ENCODE measurements at regions of chr1 and their contacts with region 1.

Region 1: GRCh38 chr1:109483672-109484518 is at the start of gene ATXN7L2:
- DNase-seq: peak; percentile 94
- H3K4me3 Mint-ChIP-seq: peak within 1 kb of the TSS; percentile 93
- H3K27ac Mint-ChIP-seq: peak within 1 kb of the TSS; percentile 79
- H3K4me1 Mint-ChIP-seq: peaks cover 36% of the 10 kb centered on the region
- H3K27me3 Mint-ChIP-seq: peaks cover 17% of the 10 kb centered on the region
- total RNA-seq, gene ATXN7L2: 7.0 to 7.6 TPM

Region 2: DNA sequence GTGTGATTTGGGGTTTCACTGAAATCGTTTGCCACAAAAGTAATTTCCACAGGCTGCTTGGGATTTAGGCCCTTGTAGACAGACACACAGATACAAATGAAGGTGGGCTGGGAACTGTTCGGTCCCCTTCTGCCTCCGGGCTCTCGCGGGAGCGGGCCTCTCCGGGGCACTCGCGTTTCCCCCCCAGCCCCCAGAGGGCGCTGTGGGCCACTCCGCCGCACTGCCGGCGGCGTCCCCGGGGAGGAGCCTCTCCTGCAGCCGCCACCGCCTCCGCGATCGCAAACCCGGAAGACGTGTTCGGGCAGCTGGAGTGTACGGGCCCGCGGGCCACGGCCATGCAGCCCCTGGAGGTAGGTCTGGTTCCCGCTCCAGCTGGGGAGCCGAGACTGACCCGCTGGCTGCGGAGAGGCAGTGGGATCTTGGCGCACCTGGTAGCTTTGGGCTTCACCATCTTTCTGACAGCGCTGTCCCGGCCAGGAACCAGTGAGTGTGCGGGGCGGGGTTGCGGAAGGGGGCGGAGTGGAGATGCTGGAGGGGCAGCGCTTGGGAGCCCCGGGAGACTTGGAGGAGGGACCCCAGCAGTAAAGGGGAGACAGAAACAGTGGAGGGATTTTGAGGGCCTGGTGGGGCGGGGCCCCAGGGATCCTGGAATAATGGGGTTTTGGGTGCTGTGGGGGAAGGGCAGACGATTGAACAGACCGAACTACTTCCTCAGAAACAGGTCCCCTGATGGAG is 10.1 kb after region 1 on chr1 and contains the start of gene CYB561D1:
- CTCF ChIA-PET with region 1: interaction called, 51 read pairs
- POLR2A ChIA-PET with region 1: interaction called, 64 read pairs
- DNase-seq: peak; percentile 91
- H3K4me3 Mint-ChIP-seq: peak within 1 kb of the TSS; percentile 96
- H3K27ac Mint-ChIP-seq: peak within 1 kb of the TSS; percentile 82
- H3K4me1 Mint-ChIP-seq: peaks cover 42% of the 10 kb centered on the region
- H3K27me3 Mint-ChIP-seq: no peaks in the 10 kb centered on the region
- total RNA-seq, gene CYB561D1: 19.5 to 21.4 TPM

Region 3: DNA sequence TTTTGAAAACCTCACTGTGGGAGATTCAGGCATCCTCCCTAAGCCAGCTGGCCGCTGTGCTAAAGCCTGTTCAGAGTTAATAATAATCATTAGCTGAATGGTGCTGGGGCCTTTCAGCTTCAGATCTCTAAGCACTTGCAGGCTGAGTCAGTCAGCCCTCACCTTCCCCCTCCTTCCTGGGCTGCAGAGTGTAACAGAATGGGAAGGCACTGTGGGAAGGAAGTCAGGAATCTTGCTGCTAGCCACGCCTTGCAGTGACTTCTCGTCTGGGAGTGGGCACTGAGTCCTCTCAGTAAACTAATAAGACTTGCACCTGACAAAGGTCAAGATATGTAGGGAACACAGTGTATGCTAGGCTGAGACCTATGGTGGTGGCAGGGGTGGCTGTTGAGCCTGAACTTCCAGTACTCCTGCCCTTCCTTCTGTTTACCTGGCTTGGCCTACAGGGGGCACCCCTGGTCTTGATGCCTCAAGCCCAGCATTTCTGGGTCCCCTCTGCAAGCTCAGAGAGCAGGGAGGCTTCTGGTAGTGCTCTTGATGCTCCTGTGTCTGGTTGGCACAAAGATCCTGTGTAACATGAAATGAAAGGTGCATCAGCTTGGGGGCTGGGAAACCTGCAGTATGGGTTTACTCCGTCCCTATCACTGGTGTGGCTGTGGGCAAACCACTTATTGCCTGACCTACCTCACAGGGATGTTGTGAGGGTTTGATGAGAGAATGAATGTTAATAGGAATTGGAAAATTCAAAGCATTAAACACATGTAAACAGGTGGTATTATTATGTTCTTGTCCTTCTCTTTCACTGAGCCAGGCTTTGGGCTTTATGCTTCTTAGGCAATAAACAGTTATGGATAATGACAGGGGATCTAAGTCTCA is 16.0 kb after region 1 on chr1:
- CTCF ChIA-PET with region 1: interaction called, 139 read pairs
- POLR2A ChIA-PET with region 1: interaction called, 64 read pairs
- DNase-seq: peak; percentile 54
- H3K4me3 Mint-ChIP-seq: no peak overlapping the region
- H3K27ac Mint-ChIP-seq: peak overlapping the region; percentile 47
- H3K4me1 Mint-ChIP-seq: peaks cover 85% of the 10 kb centered on the region
- H3K27me3 Mint-ChIP-seq: no peaks in the 10 kb centered on the region

Region 4: DNA sequence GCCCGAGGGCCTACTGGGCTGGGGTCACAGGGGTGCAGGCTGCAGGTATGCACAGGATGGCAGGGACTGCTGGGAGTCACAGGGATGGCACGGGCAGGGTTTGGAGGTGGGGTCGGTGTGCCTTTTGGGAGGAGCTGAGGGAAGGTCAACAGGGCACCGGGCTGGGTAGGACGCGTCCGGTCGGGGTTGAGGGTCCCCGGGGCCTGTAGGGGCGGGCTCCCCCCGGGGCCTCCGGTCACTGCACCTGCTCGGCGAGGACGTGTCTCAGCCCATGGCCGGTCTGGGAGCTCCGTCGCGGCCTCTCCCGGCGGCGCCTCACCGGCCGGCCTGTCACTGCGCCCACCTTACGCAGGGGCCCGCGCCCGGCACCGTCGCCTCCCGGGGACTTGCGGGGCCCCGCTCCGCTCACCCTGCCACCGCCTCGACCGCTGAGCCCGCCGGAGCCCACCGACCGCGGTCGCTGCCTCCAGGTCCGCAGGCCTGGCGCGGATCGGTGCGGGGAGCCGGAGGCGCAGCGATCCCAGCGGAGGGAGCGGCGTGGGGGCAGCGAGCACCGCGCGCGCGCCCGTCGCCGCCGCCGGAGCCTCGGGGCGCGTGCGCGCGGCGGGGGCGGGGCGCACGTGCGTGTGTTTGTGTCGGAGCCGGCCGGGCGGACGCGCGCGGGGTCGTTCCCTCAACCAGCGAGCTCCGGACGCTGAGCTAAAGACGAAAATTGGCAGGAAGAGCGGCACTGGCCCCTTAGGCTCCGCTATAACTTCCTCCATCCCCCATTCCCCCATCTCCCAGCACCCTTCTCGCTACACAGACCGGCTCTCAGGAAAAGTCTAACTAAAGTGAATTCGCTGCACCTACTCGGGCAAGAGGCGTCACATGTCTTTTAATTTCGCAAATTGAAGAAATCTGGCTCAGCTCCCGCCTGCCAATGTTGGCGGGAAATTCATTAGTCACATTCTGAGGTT is 25.6 kb after region 1 on chr1 and contains the start of gene AMIGO1:
- CTCF ChIA-PET with region 1: interaction called, 139 read pairs
- POLR2A ChIA-PET with region 1: interaction called, 10 read pairs
- DNase-seq: peak; percentile 51
- H3K4me3 Mint-ChIP-seq: peak within 1 kb of the TSS; percentile 77
- H3K27ac Mint-ChIP-seq: peak within 1 kb of the TSS; percentile 26
- H3K4me1 Mint-ChIP-seq: peaks cover 34% of the 10 kb centered on the region
- H3K27me3 Mint-ChIP-seq: peaks cover 31% of the 10 kb centered on the region
- total RNA-seq, gene AMIGO1: 1.2 to 1.3 TPM